ENCODE measurements at regions of chr2 and their contacts with region 1.

Region 1: GRCh38 chr2:102240640-102241370 is 54.0 kb downstream of the IL1RL2 start:
- DNase-seq: peak; percentile 85 to 94
- ATAC-seq: peak; percentile 94 to 98 (median 95)
- H3K4me3 ChIP-seq: no peak overlapping the region
- H3K4me3 Mint-ChIP-seq: peak overlapping the region; percentile 11
- H3K27ac ChIP-seq: peak overlapping the region; percentile 8
- H3K27ac Mint-ChIP-seq: peak overlapping the region; percentile 49 to 80
- H3K4me1 ChIP-seq: peaks cover 22% of the 10 kb centered on the region
- H3K4me1 Mint-ChIP-seq: peaks cover 12 to 22% of the 10 kb centered on the region in 2 donors
- H3K27me3 ChIP-seq: peaks cover 5% of the 10 kb centered on the region
- H3K27me3 Mint-ChIP-seq: peaks cover 32 to 37% of the 10 kb centered on the region in 2 donors
- CTCF ChIP-seq: peak; percentile 98

Region 2: GRCh38 chr2:101479328-101479727 is 761.5 kb before region 1 on chr2:
- intact Hi-C with region 1: no loop called
- DNase-seq: no peak
- ATAC-seq: no peak
- H3K4me3 ChIP-seq: no peak overlapping the region
- H3K4me3 Mint-ChIP-seq: no peak overlapping the region
- H3K27ac ChIP-seq: no peak overlapping the region
- H3K27ac Mint-ChIP-seq: no peak overlapping the region
- H3K4me1 ChIP-seq: peaks cover 17% of the 10 kb centered on the region
- H3K4me1 Mint-ChIP-seq: peaks cover 8% of the 10 kb centered on the region in 2 donors
- H3K27me3 ChIP-seq: peaks cover 5% of the 10 kb centered on the region
- H3K27me3 Mint-ChIP-seq: peaks cover 12 to 16% of the 10 kb centered on the region in 2 donors
- CTCF ChIP-seq: no peak

Region 3: GRCh38 chr2:101883863-101884262 is 356.9 kb before region 1 on chr2:
- intact Hi-C with region 1: loop called (anchors 1 kb)
- DNase-seq: peak in 1 of 2 donors; percentile 65
- ATAC-seq: peak; percentile 81 to 85 (median 81)
- H3K4me3 ChIP-seq: no peak overlapping the region
- H3K4me3 Mint-ChIP-seq: no peak overlapping the region
- H3K27ac ChIP-seq: no peak overlapping the region
- H3K27ac Mint-ChIP-seq: no peak overlapping the region
- H3K4me1 ChIP-seq: no peaks in the 10 kb centered on the region
- H3K4me1 Mint-ChIP-seq: no peaks in the 10 kb centered on the region
- H3K27me3 ChIP-seq: no peaks in the 10 kb centered on the region
- H3K27me3 Mint-ChIP-seq: no peaks in the 10 kb centered on the region
- CTCF ChIP-seq: peak; percentile 66

Region 4: DNA sequence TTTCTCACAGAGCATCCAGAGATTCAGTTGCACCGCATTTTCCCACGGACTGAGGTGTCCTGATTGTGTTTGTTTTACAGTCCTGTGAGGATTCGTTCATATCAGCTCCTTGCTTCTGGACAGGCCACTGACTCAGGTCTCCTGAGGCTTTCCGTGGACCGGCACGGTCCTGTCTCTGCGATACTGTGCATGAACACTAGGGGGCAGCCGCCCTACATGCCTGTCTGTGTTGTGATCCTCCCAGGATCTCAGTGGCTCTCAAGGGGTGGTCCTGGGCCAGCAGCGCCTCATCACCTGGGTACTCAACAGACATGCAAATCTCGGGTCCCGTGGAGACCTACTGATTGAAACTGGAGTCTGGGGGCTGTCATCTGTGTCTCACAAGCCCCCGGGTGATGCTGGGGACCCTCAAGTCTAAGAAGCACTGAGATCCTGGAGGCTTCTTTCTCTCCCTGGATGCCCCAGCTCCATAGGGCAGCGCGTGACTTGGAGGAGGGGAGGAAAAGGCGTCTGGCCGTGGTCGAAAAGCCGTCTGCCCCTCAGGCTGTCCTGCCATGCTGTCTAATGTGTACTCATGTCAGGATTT is 220.1 kb before region 1 on chr2:
- intact Hi-C with region 1: loop called (anchors 1 kb)
- DNase-seq: peak; percentile 76 to 86
- ATAC-seq: peak; percentile 95 to 100 (median 99)
- H3K4me3 ChIP-seq: no peak overlapping the region
- H3K4me3 Mint-ChIP-seq: no peak overlapping the region
- H3K27ac ChIP-seq: no peak overlapping the region
- H3K27ac Mint-ChIP-seq: no peak overlapping the region
- H3K4me1 ChIP-seq: peaks cover 12% of the 10 kb centered on the region
- H3K4me1 Mint-ChIP-seq: peaks cover 0 to 6% of the 10 kb centered on the region in 2 donors
- H3K27me3 ChIP-seq: no peaks in the 10 kb centered on the region
- H3K27me3 Mint-ChIP-seq: peaks cover 31 to 60% of the 10 kb centered on the region in 2 donors
- CTCF ChIP-seq: peak; percentile 97

Region 5: GRCh38 chr2:102185347-102185746 is 55.5 kb before region 1 on chr2:
- intact Hi-C with region 1: loop called (anchors 2 kb)
- DNase-seq: peak in 1 of 2 donors; percentile 38
- ATAC-seq: peak in 1 of 3 donors; percentile 44
- H3K4me3 ChIP-seq: no peak overlapping the region
- H3K4me3 Mint-ChIP-seq: no peak overlapping the region
- H3K27ac ChIP-seq: no peak overlapping the region
- H3K27ac Mint-ChIP-seq: no peak overlapping the region
- H3K4me1 ChIP-seq: peaks cover 8% of the 10 kb centered on the region
- H3K4me1 Mint-ChIP-seq: peaks cover 6 to 7% of the 10 kb centered on the region in 2 donors
- H3K27me3 ChIP-seq: peaks cover 5% of the 10 kb centered on the region
- H3K27me3 Mint-ChIP-seq: peaks cover 36 to 68% of the 10 kb centered on the region in 2 donors
- CTCF ChIP-seq: peak; percentile 47

Region 6: DNA sequence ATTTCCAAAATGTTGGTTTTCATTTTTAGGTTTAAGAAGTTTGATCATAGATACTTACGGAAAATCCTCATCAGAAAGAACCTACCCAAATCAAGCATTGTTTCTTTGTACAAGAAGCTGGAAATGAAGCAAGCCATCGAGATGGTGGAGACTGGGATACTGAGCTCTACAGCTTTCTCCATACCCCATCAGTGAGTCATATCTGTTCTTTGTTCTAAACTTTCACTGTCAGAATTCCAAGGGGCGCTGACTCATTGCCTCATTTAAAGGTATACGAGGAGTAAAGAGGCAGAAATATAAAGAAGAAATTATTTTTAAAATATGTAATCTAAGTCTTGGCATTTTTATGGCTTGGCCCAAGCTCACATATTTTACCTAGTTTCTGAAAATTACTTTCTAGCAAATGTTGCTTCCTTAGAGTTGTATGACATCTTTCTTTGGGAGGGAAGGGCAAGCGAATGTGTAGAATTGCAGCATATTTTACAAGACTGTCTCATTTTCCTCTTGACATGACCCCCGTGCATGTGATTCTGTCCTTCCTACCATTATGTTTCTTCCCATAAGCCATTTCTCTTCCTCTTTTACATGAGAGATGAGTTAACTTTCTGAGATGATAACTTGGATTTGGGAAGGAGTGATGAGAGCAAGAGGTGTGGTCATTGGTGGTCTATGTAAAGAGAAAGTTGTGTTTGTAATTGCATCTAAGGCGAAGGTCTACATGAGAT is 273.4 kb after region 1 on chr2:
- intact Hi-C with region 1: no loop called
- DNase-seq: no peak
- ATAC-seq: no peak
- H3K4me3 ChIP-seq: no peak overlapping the region
- H3K4me3 Mint-ChIP-seq: no peak overlapping the region
- H3K27ac ChIP-seq: no peak overlapping the region
- H3K27ac Mint-ChIP-seq: no peak overlapping the region
- H3K4me1 ChIP-seq: no peaks in the 10 kb centered on the region
- H3K4me1 Mint-ChIP-seq: peaks cover 6 to 7% of the 10 kb centered on the region in 2 donors
- H3K27me3 ChIP-seq: no peaks in the 10 kb centered on the region
- H3K27me3 Mint-ChIP-seq: peaks cover 6 to 11% of the 10 kb centered on the region in 2 donors
- CTCF ChIP-seq: no peak

Measured in natural killer cell (primary cell).